ENCODE measurements at regions of chr3 and their contacts with region 1.

Region 1: GRCh38 chr3:22960105-22960984 is 242.8 kb upstream of the UBE2E2 start:
- DNase-seq: no peak
- H3K4me3 ChIP-seq: no peak overlapping the region
- H3K27ac ChIP-seq: no peak overlapping the region
- H3K4me1 ChIP-seq: peaks cover 0 to 12% (median 3%) of the 10 kb centered on the region in 6 donors
- H3K27me3 ChIP-seq: no peaks in the 10 kb centered on the region
- CTCF ChIP-seq: peak; percentile 19 to 72 (median 60)
- POLR2A ChIP-seq: no peak

Region 2: DNA sequence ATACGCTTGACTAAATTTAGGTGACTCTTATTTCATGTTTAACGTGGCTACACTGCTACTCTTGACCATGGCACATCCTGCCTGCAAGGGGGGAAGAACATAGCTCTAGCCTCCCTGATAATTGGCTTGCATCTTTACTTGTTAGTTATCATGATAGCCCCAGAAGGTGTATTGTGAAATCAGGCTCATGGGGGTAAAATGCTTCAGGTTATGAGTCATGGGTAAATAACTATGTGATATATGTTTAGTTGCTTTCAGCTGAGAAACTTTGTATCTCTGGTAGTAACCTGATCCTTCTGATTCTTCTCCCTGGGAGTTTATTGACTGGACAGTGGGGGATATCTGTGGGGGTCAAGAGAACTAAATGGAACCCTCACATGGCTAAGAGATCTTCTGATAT is 418.0 kb before region 1 on chr3:
- intact Hi-C with region 1: no loop called
- DNase-seq: no peak
- H3K4me3 ChIP-seq: no peak overlapping the region
- H3K27ac ChIP-seq: no peak overlapping the region
- H3K4me1 ChIP-seq: no peaks in the 10 kb centered on the region
- H3K27me3 ChIP-seq: no peaks in the 10 kb centered on the region
- CTCF ChIP-seq: no peak
- POLR2A ChIP-seq: no peak

Region 3: DNA sequence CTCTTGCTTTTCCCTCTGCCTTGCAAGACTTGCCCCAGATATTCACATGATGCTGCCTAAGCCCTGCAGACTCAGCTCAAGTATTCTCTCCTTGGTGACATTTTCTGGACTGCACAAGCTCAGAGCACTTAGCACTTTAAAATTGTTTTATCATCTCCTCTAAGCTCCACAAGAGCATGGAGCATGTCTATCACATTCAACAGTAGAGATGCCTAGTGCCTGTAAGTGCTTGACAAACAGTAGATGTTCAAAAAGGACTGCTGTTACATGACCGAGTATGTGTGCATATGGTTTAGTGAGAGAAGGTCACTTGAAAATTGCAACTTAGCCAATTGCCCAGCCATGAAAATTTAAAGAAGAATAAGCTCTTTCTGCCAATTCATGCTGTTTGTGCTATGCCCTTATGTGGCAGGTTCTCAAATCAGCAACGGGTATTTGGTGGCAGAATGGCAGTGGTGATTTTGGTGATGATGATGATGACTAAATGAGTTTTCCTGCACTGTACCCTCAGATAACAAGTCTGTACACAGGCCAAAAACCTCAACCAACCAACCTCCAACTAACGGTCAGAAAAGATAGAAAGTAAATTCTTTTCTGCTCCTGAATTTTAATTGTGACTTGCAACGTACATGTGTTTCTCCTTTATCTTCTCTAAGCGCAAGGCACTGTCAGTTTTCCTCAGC is 404.5 kb before region 1 on chr3:
- intact Hi-C with region 1: loop called (anchors 5 kb)
- DNase-seq: no peak
- H3K4me3 ChIP-seq: no peak overlapping the region
- H3K27ac ChIP-seq: no peak overlapping the region
- H3K4me1 ChIP-seq: no peaks in the 10 kb centered on the region
- H3K27me3 ChIP-seq: no peaks in the 10 kb centered on the region
- CTCF ChIP-seq: no peak
- POLR2A ChIP-seq: no peak

Region 4: DNA sequence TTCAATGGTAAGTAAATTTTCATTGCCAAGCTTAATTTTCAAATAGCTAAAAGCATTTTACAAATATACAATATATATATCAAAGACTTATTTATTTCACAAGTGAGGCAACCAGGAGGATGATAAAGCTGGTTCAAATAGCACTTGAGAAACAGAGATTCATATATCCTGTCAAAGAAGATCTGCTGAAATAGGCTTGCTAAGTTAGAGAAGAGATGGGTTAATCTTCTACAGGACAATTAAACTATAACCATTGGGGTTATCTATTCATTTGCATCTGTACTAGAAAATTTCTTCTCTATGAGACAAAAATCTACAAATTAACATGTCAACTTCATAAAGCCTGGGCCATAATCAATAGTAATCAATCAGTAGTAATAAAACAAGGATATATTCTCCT is 395.0 kb before region 1 on chr3:
- intact Hi-C with region 1: loop called (anchors 5 kb)
- DNase-seq: no peak
- H3K4me3 ChIP-seq: no peak overlapping the region
- H3K27ac ChIP-seq: no peak overlapping the region
- H3K4me1 ChIP-seq: no peaks in the 10 kb centered on the region
- H3K27me3 ChIP-seq: peaks cover 0 to 4% (median 0%) of the 10 kb centered on the region in 7 donors
- CTCF ChIP-seq: no peak
- POLR2A ChIP-seq: no peak

Region 5: DNA sequence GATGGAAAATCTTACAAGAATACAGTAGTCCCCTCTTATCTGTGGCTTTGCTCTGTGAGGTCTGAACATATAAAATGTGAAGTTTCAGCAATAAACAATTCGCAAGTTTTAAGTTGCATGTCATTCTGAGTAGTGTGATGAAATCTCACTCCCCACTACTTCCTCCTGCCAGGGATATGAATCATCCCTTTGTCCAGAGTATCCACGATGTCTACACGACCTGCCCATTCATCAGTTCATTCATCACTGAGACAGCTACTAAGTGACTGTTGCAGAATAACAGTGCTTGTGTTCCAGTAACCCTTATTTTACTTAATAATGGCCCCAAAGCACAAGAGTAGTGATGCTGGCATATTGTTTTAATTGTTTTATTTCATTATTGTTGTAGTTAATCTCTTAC is 246.4 kb before region 1 on chr3:
- intact Hi-C with region 1: no loop called
- DNase-seq: no peak
- H3K4me3 ChIP-seq: no peak overlapping the region
- H3K27ac ChIP-seq: no peak overlapping the region
- H3K4me1 ChIP-seq: no peaks in the 10 kb centered on the region
- H3K27me3 ChIP-seq: no peaks in the 10 kb centered on the region
- CTCF ChIP-seq: no peak
- POLR2A ChIP-seq: no peak